Endothelial cell of umbilical vein (primary cell): ENCODE measurements at regions of chr6 and their contacts with region 1.

Region 1: GRCh38 chr6:142200846-142201628 is 54.0 kb downstream of the VTA1 start:
- DNase-seq: peak; percentile 83
- H3K4me3 ChIP-seq: no peak overlapping the region
- H3K27ac ChIP-seq: peak overlapping the region; percentile 78
- H3K4me1 ChIP-seq: peaks cover 38% of the 10 kb centered on the region
- H3K27me3 ChIP-seq: no peaks in the 10 kb centered on the region
- CTCF ChIP-seq: no peak
- POLR2A ChIP-seq: no peak

Region 2: GRCh38 chr6:142014515-142014914 is 186.5 kb before region 1 on chr6:
- CTCF ChIA-PET with region 1: no interaction called
- POLR2A ChIA-PET with region 1: no interaction called
- dilution Hi-C with region 1: no loop called
- intact Hi-C with region 1: loop called (anchors 5 kb)
- DNase-seq: peak; percentile 79
- H3K4me3 ChIP-seq: peak overlapping the region in 1 of 3 experiments; percentile 19
- H3K27ac ChIP-seq: peak overlapping the region; percentile 78
- H3K4me1 ChIP-seq: peaks cover 43% of the 10 kb centered on the region
- H3K27me3 ChIP-seq: no peaks in the 10 kb centered on the region
- CTCF ChIP-seq: no peak
- POLR2A ChIP-seq: peak; percentile 50

Region 3: GRCh38 chr6:142075516-142076101 is 125.4 kb before region 1 on chr6:
- CTCF ChIA-PET with region 1: no interaction called
- POLR2A ChIA-PET with region 1: no interaction called
- dilution Hi-C with region 1: no loop called
- intact Hi-C with region 1: no loop called
- DNase-seq: no peak
- H3K4me3 ChIP-seq: no peak overlapping the region
- H3K27ac ChIP-seq: no peak overlapping the region
- H3K4me1 ChIP-seq: no peaks in the 10 kb centered on the region
- H3K27me3 ChIP-seq: no peaks in the 10 kb centered on the region
- CTCF ChIP-seq: no peak
- POLR2A ChIP-seq: no peak